ENCODE measurements at regions of chr6 and their contacts with region 1.

Region 1: DNA sequence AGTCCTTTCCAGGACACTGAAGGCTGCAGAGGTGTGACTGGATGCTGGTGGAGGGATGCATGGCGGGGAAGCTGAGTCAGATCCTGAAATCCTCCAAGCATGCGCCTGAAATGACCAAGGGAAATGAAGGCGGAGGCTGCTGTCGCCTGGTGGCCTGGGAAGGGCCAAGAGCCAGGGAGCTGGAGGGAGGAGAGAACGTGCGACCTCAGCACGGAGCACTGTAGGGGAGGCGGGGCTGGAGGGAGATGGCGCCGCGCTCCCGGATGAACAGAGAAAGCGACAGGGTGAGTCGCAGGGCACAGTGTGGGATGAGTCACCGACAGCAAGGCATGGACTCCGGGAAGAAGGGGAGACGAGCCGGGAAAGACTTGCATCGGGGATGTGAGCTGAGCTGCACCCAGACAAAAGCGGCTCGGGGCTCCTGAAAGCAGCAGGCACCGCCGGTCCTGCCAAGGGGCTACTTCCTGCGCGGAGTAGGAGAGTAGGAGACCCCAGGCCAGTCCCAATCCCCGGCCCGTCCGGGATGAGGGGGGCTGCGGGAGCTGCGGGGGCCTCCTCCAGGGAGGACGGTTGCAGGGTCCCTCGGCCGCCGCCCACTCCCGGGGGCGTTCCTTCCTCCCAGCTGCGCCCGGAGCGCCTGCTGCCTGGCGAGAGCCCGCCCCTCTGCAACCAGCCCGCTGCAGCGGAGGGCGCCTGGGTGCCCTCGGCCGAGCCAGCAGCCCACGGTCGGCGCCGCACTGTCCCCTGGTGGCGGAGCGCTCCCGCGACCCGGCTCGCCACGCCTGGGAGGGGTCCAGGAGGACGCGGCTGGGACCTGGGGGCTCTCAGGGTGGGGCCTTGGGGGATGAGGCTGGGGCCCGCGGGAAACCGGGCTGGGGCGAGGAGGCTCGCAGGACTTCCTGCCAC is 11.0 kb upstream of the NQO2 start:
- DNase-seq: peak; percentile 71 to 86 (median 77)
- H3K4me3 ChIP-seq: peak overlapping the region; percentile 78
- H3K4me3 Mint-ChIP-seq: peak overlapping the region; percentile 87 to 97 (median 96)
- H3K27ac ChIP-seq: peak overlapping the region; percentile 98
- H3K27ac Mint-ChIP-seq: peak overlapping the region; percentile 98 to 100 (median 99)
- H3K4me1 ChIP-seq: peaks cover 23% of the 10 kb centered on the region
- H3K4me1 Mint-ChIP-seq: peaks cover 27 to 38% (median 31%) of the 10 kb centered on the region in 3 donors
- H3K27me3 ChIP-seq: no peaks in the 10 kb centered on the region
- H3K27me3 Mint-ChIP-seq: no peaks in the 10 kb centered on the region

Region 2: DNA sequence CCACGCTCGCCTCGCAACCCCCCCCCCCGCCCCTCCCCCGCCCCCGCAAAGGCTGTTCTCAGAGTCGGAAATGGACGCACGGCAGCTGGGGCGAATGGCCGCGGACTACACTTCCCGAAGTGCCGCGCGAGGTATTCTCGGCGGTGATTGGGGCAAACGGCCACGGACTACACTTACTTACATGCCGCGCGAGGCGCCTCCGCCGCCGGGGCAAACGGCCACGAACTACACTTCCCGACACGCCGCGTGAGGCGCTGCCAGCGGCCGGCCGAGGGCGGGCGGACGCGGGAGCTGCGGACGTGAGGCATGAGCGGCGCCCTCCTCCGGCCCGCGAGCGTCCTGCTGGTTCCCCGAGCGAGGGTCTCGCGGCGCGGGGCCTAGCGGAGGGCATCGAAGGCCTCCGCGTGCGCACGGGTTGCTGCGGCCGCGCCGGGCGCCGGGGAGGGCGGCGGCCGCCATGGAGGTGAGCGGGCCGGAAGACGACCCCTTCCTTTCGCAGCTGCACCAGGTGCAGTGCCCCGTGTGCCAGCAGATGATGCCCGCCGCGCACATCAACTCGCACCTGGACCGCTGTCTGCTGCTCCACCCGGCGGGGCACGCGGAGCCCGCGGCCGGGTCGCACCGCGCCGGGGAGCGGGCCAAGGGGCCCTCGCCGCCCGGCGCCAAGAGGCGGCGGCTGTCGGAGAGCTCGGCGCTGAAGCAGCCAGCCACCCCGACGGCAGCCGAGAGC is 223.3 kb before region 1 on chr6 and contains the start of gene WRNIP1:
- CTCF ChIA-PET with region 1: interaction called, 7 read pairs
- POLR2A ChIA-PET with region 1: interaction called, 13 read pairs
- DNase-seq: peak; percentile 92 to 99 (median 96)
- H3K4me3 ChIP-seq: peak within 1 kb of the TSS; percentile 85
- H3K4me3 Mint-ChIP-seq: peak within 1 kb of the TSS; percentile 90 to 98 (median 93)
- H3K27ac ChIP-seq: peak within 1 kb of the TSS; percentile 96
- H3K27ac Mint-ChIP-seq: peak within 1 kb of the TSS; percentile 96 to 100 (median 99)
- H3K4me1 ChIP-seq: peaks cover 34% of the 10 kb centered on the region
- H3K4me1 Mint-ChIP-seq: peaks cover 54 to 61% (median 59%) of the 10 kb centered on the region in 3 donors
- H3K27me3 ChIP-seq: no peaks in the 10 kb centered on the region
- H3K27me3 Mint-ChIP-seq: no peaks in the 10 kb centered on the region
- total RNA-seq, gene WRNIP1: 58.5 to 58.7 TPM

Region 3: GRCh38 chr6:2857580-2858337 is 130.9 kb before region 1 on chr6:
- CTCF ChIA-PET with region 1: interaction called, 12 read pairs
- POLR2A ChIA-PET with region 1: interaction called, 3 read pairs
- DNase-seq: peak; percentile 49 to 90 (median 72)
- H3K4me3 ChIP-seq: peak overlapping the region; percentile 35
- H3K4me3 Mint-ChIP-seq: peak overlapping the region; percentile 81 to 89 (median 84)
- H3K27ac ChIP-seq: peak overlapping the region; percentile 85
- H3K27ac Mint-ChIP-seq: peak overlapping the region; percentile 91 to 100 (median 99)
- H3K4me1 ChIP-seq: peaks cover 88% of the 10 kb centered on the region
- H3K4me1 Mint-ChIP-seq: peaks cover 85 to 96% (median 88%) of the 10 kb centered on the region in 3 donors
- H3K27me3 ChIP-seq: no peaks in the 10 kb centered on the region
- H3K27me3 Mint-ChIP-seq: peaks cover 0 to 1% of the 10 kb centered on the region in 2 donors

Region 4: DNA sequence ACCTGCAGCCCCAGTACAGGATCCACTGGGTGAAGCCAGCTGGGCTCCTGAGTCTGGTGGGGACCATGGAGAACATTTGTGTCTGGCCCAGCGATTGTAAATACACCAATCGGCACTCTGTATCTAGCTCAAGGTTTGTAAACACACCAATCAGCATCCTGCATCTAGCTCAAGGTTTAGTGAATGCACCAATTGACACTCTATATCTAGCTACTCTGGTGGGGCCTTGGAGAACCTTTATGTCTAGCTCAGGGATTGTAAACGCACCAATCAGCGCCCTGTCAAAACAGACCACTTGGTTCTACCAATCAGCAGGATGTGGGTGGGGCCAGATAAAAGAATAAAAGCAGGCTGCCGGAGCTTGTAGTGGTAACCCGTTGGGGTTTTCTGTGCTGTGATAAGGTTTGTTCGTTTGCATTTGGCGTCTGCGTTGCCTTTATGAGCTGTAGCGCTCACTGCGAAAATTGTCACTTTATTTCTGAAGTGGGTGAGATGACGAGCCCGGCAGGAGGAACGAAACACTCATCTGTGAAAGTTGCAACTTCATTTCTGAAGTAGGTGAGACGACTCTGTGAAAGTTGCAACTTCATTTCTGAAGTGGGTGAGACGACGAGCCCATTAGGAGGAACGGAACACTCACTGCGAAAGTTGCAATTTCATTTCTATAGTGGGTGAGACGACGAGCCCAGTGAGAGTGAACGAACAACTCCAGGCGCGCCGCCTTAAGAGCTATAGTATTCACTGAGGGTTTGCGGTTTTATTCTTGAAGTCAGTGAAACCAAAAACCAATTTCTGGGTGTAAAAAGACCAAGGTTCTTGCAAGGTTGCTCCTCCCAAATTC is 48.4 kb before region 1 on chr6:
- CTCF ChIA-PET with region 1: interaction called, 102 read pairs
- POLR2A ChIA-PET with region 1: interaction called, 21 read pairs
- DNase-seq: peak; percentile 46 to 86 (median 78)
- H3K4me3 ChIP-seq: peak overlapping the region; percentile 85
- H3K4me3 Mint-ChIP-seq: peak overlapping the region; percentile 71 to 92 (median 89)
- H3K27ac ChIP-seq: peak overlapping the region; percentile 60
- H3K27ac Mint-ChIP-seq: peak overlapping the region; percentile 90 to 99 (median 94)
- H3K4me1 ChIP-seq: peaks cover 73% of the 10 kb centered on the region
- H3K4me1 Mint-ChIP-seq: peaks cover 59 to 70% (median 61%) of the 10 kb centered on the region in 3 donors
- H3K27me3 ChIP-seq: no peaks in the 10 kb centered on the region
- H3K27me3 Mint-ChIP-seq: peaks cover 0 to 1% of the 10 kb centered on the region in 2 donors

Region 5: GRCh38 chr6:2976571-2977085 is 12.1 kb before region 1 on chr6:
- CTCF ChIA-PET with region 1: interaction called, 65 read pairs
- POLR2A ChIA-PET with region 1: interaction called, 32 read pairs
- DNase-seq: no peak
- H3K4me3 ChIP-seq: no peak overlapping the region
- H3K4me3 Mint-ChIP-seq: peak overlapping the region in 4 of 7 donors; percentile 15 to 89 (median 66)
- H3K27ac ChIP-seq: no peak overlapping the region
- H3K27ac Mint-ChIP-seq: peak overlapping the region in 2 of 8 donors; percentile 60 to 92
- H3K4me1 ChIP-seq: peaks cover 11% of the 10 kb centered on the region
- H3K4me1 Mint-ChIP-seq: peaks cover 16 to 34% (median 22%) of the 10 kb centered on the region in 3 donors
- H3K27me3 ChIP-seq: no peaks in the 10 kb centered on the region
- H3K27me3 Mint-ChIP-seq: peaks cover 7 to 17% of the 10 kb centered on the region in 2 donors

Region 6: GRCh38 chr6:3032986-3033385 is 44.3 kb after region 1 on chr6:
- CTCF ChIA-PET with region 1: no interaction called
- POLR2A ChIA-PET with region 1: no interaction called
- DNase-seq: no peak
- H3K4me3 ChIP-seq: no peak overlapping the region
- H3K4me3 Mint-ChIP-seq: no peak overlapping the region
- H3K27ac ChIP-seq: no peak overlapping the region
- H3K27ac Mint-ChIP-seq: no peak overlapping the region
- H3K4me1 ChIP-seq: no peaks in the 10 kb centered on the region
- H3K4me1 Mint-ChIP-seq: peaks cover 7 to 10% (median 10%) of the 10 kb centered on the region in 3 donors
- H3K27me3 ChIP-seq: no peaks in the 10 kb centered on the region
- H3K27me3 Mint-ChIP-seq: peaks cover 3 to 17% of the 10 kb centered on the region in 2 donors

Region 7: GRCh38 chr6:3068329-3069214 is 79.9 kb after region 1 on chr6 and contains the start of gene RIPK1:
- CTCF ChIA-PET with region 1: interaction called, 11 read pairs
- POLR2A ChIA-PET with region 1: interaction called, 18 read pairs
- DNase-seq: peak; percentile 93 to 96 (median 94)
- H3K4me3 ChIP-seq: peak within 1 kb of the TSS; percentile 97
- H3K4me3 Mint-ChIP-seq: peak within 1 kb of the TSS; percentile 95 to 99 (median 97)
- H3K27ac ChIP-seq: peak within 1 kb of the TSS; percentile 90
- H3K27ac Mint-ChIP-seq: peak within 1 kb of the TSS; percentile 97 to 99 (median 98)
- H3K4me1 ChIP-seq: peaks cover 29% of the 10 kb centered on the region
- H3K4me1 Mint-ChIP-seq: peaks cover 61 to 82% (median 79%) of the 10 kb centered on the region in 3 donors
- H3K27me3 ChIP-seq: no peaks in the 10 kb centered on the region
- H3K27me3 Mint-ChIP-seq: peaks cover 0 to 2% of the 10 kb centered on the region in 2 donors
- total RNA-seq, gene RIPK1: 21.7 to 22.1 TPM